Transverse colon (tissue), 4 donors: ENCODE measurements at regions of chr22 and their contacts with region 1.

Region 1: GRCh38 chr22:34129691-34130486 is 209.6 kb upstream of the LARGE1 start:
- DNase-seq: peak; percentile 11
- H3K4me3 ChIP-seq: no peak overlapping the region
- H3K27ac ChIP-seq: peak overlapping the region in 1 of 4 donors; percentile 14
- H3K4me1 ChIP-seq: no peaks in the 10 kb centered on the region
- H3K27me3 ChIP-seq: no peaks in the 10 kb centered on the region
- CTCF ChIP-seq: no peak
- EP300 ChIP-seq: no peak
- POLR2A ChIP-seq: no peak

Region 2: DNA sequence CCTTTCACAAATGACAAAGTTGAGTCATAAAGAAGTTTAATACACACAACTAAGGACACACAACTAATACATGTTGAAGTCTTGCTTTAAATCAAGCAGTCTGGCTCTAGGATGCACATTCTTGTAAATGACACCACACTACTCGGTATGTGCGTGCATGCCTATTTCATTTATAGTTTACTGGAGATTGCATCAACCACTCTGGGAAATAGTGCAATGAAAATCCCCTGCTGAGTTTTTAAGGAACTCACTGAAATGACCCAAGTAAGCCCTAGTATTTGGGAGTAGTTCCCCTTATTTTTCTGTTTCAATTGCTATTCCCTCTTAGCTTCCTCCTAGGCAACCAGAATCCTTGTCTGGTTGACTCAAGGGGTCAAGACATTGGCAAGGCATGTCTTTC is 49.5 kb before region 1 on chr22:
- in situ Hi-C with region 1: no loop called
- intact Hi-C with region 1: loop called (anchors 1 kb)
- DNase-seq: no peak
- H3K4me3 ChIP-seq: no peak overlapping the region
- H3K27ac ChIP-seq: no peak overlapping the region
- H3K4me1 ChIP-seq: no peaks in the 10 kb centered on the region
- H3K27me3 ChIP-seq: no peaks in the 10 kb centered on the region
- CTCF ChIP-seq: no peak
- EP300 ChIP-seq: no peak
- POLR2A ChIP-seq: no peak

Region 3: DNA sequence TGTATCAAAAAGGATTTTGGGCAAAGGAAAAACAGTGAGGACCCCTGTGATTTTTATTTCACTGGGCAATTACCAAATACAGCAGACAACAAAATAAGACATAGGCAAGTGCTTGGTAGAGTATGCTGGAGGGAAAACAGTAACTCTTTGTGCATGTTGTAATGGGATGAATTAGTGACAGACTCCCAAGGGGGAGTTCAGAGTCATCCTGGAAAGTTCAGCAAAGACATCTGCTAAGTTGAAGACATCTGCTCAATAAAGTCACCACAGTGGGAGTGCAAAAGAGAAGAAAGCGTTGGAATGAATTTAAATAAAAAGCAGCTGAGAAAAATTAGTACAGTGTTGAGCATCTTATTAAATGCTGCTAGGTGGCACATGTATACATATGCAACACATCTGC is 557.2 kb after region 1 on chr22:
- in situ Hi-C with region 1: no loop called
- intact Hi-C with region 1: no loop called
- DNase-seq: no peak
- H3K4me3 ChIP-seq: no peak overlapping the region
- H3K27ac ChIP-seq: no peak overlapping the region
- H3K4me1 ChIP-seq: no peaks in the 10 kb centered on the region
- H3K27me3 ChIP-seq: no peaks in the 10 kb centered on the region
- CTCF ChIP-seq: no peak
- EP300 ChIP-seq: no peak
- POLR2A ChIP-seq: no peak